Endothelial cell of umbilical vein (primary cell): ENCODE measurements at regions of chr7 and their contacts with region 1.

Region 1: DNA sequence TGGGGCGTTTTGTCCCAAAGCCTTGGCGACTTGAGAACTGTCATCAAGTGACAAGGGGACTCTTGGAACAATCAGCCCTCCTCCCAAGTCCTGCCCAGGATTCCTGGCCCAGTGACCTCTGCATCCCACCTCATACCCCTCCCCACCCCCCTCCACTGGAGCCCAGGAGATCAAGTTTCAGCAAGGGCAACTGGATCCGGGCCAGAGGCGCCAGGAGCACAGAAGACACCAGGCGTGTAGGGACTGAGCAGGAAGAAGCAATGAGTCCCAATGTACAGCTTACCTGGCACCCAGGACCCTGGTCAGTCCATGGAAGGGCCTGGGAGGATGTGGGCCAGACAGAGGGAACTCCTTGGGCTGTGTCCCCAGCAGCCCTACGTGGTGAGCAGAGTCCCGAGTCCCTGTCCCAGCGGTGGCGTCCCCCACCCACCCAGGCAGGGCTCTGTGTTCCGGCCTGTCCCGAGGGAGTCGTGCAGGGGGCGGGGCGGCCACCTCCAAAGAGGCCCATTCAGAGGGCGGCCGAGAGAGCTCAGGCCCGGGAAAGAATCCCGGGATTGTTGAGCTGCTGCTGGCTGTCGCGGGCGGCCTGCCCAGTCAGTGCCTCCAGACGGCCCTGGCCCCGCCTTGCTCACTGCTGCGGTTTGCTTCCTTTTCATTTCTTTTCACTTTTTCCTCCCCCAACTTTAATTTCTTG is 254.1 kb downstream of the TNS3 start:
- DNase-seq: peak; percentile 48
- H3K4me3 ChIP-seq: peak overlapping the region in 1 of 3 experiments; percentile 13
- H3K27ac ChIP-seq: peak overlapping the region; percentile 38
- H3K4me1 ChIP-seq: peaks cover 32% of the 10 kb centered on the region
- H3K27me3 ChIP-seq: no peaks in the 10 kb centered on the region
- CTCF ChIP-seq: no peak
- POLR2A ChIP-seq: no peak

Region 2: DNA sequence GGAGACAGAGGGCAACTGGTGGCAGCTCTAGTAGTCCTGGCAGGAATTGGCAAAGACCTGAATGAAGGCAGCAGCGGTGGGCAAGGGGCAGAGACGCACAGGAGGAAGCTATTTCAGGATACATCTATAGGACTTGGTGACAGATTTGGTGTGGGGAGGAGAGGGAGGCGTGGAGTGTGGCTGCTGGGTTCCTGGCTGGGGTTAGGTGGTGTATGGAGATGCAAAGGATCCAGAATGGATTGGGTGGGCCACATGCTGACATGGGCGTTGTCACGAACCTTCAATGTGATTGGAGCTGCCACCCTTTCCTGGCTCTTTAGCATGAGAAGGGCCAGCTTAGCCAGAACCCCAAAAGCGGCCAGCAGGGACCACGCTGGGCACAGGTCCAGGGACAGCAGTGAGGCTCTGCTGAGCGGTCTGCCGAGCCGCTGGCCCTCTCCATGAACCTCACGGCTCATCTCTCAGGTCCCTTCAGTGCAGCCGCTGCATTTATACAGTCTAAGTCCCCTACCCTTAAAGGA is 1763.8 kb before region 1 on chr7:
- CTCF ChIA-PET with region 1: no interaction called
- POLR2A ChIA-PET with region 1: no interaction called
- dilution Hi-C with region 1: no loop called
- intact Hi-C with region 1: loop called (anchors 10 kb)
- DNase-seq: no peak
- H3K4me3 ChIP-seq: no peak overlapping the region
- H3K27ac ChIP-seq: no peak overlapping the region
- H3K4me1 ChIP-seq: no peaks in the 10 kb centered on the region
- H3K27me3 ChIP-seq: peaks cover 0 to 2% of the 10 kb centered on the region in 2 experiments
- CTCF ChIP-seq: no peak
- POLR2A ChIP-seq: no peak

Region 3: GRCh38 chr7:47428092-47428767 is 100.4 kb after region 1 on chr7:
- CTCF ChIA-PET with region 1: no interaction called
- POLR2A ChIA-PET with region 1: no interaction called
- dilution Hi-C with region 1: no loop called
- intact Hi-C with region 1: loop called (anchors 5 kb)
- DNase-seq: peak; percentile 74
- H3K4me3 ChIP-seq: no peak overlapping the region
- H3K27ac ChIP-seq: peak overlapping the region; percentile 67
- H3K4me1 ChIP-seq: peaks cover 21% of the 10 kb centered on the region
- H3K27me3 ChIP-seq: no peaks in the 10 kb centered on the region
- CTCF ChIP-seq: no peak
- POLR2A ChIP-seq: no peak

Region 4: DNA sequence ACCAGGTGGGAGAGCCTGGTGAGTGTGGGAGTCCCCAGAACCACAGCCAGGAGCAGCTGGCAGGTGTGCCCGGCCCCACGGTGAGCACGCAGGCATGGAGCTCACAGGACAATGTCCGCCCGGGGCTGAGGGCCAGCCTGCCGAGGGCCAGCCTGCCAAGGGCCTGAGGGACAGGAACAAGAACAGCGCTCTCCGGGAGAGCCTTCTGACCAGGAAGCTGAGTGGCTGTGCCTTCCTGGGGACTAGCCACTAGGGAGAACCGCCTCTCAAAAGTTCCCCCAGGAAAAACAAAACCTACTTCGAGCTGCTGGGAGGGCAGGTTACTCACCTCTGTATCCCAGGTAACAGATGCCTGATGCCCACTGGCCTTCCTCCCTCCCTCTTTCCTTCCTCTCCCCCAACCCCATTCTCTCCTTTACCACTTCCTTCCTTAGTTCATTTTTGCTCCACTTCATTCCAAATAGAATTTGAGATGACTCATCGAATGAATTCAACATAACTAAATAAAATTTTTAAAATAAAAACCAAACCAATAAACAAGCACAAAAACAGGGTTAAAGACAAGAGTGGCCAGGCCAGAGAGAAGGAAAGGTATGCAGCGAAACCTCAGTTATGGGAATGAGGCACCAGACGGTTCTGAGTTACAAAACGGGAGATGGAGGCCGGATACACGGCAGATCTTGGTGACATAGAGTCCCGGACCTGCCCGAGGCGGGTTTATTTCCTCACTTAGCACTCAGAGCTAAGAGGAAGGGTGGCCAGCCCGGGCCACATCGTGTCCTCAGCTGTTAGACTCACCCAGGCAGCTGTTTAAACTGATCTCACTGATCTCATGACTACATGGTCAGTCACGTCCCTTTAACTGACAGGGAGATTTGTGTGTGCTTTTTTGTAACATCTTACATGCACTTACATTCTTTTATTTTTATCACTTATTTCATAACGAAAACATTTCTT is 125.5 kb after region 1 on chr7:
- CTCF ChIA-PET with region 1: no interaction called
- POLR2A ChIA-PET with region 1: no interaction called
- dilution Hi-C with region 1: no loop called
- intact Hi-C with region 1: no loop called
- DNase-seq: peak; percentile 74
- H3K4me3 ChIP-seq: peak overlapping the region in 2 of 3 experiments; percentile 38 to 72
- H3K27ac ChIP-seq: peak overlapping the region; percentile 99
- H3K4me1 ChIP-seq: peaks cover 46% of the 10 kb centered on the region
- H3K27me3 ChIP-seq: no peaks in the 10 kb centered on the region
- CTCF ChIP-seq: no peak
- POLR2A ChIP-seq: no peak